ENCODE measurements at regions of chr3 and their contacts with region 1.

Region 1: GRCh38 chr3:15332405-15333098 is at the start of gene SH3BP5:
- H3K4me3 Mint-ChIP-seq: peak within 1 kb of the TSS; percentile 90
- H3K27ac Mint-ChIP-seq: peak within 1 kb of the TSS; percentile 73
- H3K4me1 Mint-ChIP-seq: peaks cover 33% of the 10 kb centered on the region
- H3K27me3 Mint-ChIP-seq: peaks cover 24% of the 10 kb centered on the region

Region 2: GRCh38 chr3:15295506-15295905 is 37.0 kb before region 1 on chr3:
- intact Hi-C with region 1: loop called (anchors 5 kb)
- H3K4me3 Mint-ChIP-seq: no peak overlapping the region
- H3K27ac Mint-ChIP-seq: peak overlapping the region; percentile 94
- H3K4me1 Mint-ChIP-seq: peaks cover 79% of the 10 kb centered on the region
- H3K27me3 Mint-ChIP-seq: no peaks in the 10 kb centered on the region

Region 3: DNA sequence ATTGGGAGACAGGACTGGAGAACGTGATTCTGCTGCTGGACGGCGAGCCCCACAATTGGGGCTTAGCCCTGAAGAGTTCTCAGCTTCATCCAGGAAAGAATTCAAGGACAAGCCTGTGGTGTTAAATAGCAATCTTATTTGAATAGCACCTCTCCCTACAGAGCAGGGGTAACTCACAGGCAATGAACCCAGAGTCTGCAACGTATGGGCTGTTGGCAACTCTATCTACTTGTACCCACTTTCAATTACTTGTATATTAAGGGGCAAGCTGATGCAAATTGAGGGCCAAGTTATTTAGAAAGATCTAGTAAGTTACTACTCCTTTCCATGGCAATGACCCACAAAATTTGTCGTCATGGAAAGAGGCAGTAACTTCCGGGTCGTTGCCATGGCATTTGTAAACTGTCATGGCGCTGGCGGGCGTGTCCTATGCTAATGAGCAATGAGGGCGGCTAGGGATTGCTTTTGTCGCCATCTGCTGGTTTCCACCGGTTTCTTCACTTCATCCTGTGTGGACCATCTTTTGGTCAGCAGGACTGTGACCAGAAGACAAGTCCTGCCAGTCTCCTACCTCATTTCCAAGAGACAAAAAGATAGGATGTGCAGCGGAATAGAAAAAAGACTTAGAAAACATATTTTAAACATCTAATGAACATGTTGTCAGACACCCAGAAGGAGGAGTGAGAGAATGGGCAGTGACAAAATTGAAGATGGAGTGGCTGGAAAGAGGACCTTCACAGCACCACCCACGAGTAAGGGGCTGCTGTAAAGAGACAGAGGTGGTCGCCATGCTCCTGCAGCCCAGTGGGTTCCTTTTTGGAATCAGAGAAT is 45.6 kb after region 1 on chr3:
- intact Hi-C with region 1: loop called (anchors 2 kb)
- H3K4me3 Mint-ChIP-seq: no peak overlapping the region
- H3K27ac Mint-ChIP-seq: peak overlapping the region; percentile 74
- H3K4me1 Mint-ChIP-seq: peaks cover 24% of the 10 kb centered on the region
- H3K27me3 Mint-ChIP-seq: no peaks in the 10 kb centered on the region

Region 4: DNA sequence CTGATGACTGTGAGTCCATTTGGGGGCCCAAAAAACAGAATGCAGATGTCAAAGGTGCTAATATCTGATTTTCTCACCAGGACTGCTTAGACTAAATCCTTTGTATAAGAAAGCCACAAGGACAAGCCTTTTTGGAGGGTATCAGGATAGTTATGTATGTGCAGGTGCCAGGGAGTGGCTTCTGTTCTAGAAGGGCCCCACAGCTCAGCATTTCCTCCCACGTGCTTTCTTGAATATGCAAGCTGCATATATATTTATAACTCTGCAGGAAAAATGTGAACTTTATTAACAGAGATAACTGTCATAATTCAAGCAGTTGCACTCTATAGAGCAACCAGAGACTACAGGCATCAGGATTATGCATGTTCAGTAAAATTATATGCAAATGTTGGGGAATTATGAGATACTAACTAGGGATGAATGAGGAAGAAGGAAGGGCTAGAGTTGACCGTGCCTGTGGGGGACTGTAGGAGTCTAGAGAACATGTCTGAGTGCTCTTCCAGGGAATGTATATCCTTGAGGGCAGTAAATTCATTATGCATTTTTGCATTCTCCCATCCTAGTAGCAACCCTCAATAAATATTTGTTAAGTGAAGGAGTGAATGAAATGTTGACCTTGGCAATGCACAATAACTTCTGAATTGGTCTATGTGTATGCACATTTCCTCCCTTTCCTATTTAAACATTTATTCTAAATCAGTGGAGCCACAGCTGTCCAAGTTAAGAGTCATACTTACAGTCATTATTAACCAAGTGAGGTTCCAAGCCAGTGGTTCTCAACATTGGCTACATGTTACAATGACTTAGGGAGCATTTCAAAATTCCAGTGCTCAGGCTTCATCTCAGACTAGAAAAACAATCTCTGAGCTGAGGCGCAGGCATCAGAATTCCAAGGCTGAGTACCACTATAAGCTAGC is 560.0 kb after region 1 on chr3:
- intact Hi-C with region 1: no loop called
- H3K4me3 Mint-ChIP-seq: no peak overlapping the region
- H3K27ac Mint-ChIP-seq: no peak overlapping the region
- H3K4me1 Mint-ChIP-seq: no peaks in the 10 kb centered on the region
- H3K27me3 Mint-ChIP-seq: no peaks in the 10 kb centered on the region

Measured in dendritic cell treated with granulocyte-macrophage colony-stimulating factor and Interleukin-4, amounts not matched to agents 40 ng/mL and 50 ng/mL, for 4 days (primary cell).